ENCODE measurements at regions of chr6 and their contacts with region 1.

Region 1: GRCh38 chr6:12289933-12290820 is at the start of gene EDN1:
- DNase-seq: peak; percentile 86
- H3K4me3 Mint-ChIP-seq: peak within 1 kb of the TSS; percentile 75
- H3K27ac Mint-ChIP-seq: peak within 1 kb of the TSS; percentile 94
- H3K4me1 Mint-ChIP-seq: peaks cover 55% of the 10 kb centered on the region
- H3K27me3 Mint-ChIP-seq: no peaks in the 10 kb centered on the region
- CTCF ChIP-seq: peak; percentile 39
- total RNA-seq, gene EDN1: 1.2 and 2.7 TPM in 2 replicates

Region 2: GRCh38 chr6:11770546-11771466 is 519.4 kb before region 1 on chr6:
- CTCF ChIA-PET with region 1: interaction called, 4 read pairs
- POLR2A ChIA-PET with region 1: interaction called, 11 read pairs
- intact Hi-C with region 1: loop called (anchors 5 kb)
- DNase-seq: peak; percentile 100
- H3K4me3 Mint-ChIP-seq: peak overlapping the region; percentile 69
- H3K27ac Mint-ChIP-seq: peak overlapping the region; percentile 96
- H3K4me1 Mint-ChIP-seq: peaks cover 61% of the 10 kb centered on the region
- H3K27me3 Mint-ChIP-seq: no peaks in the 10 kb centered on the region
- CTCF ChIP-seq: no peak

Region 3: GRCh38 chr6:11833626-11834592 is 456.3 kb before region 1 on chr6:
- CTCF ChIA-PET with region 1: no interaction called
- POLR2A ChIA-PET with region 1: no interaction called
- intact Hi-C with region 1: no loop called
- DNase-seq: no peak
- H3K4me3 Mint-ChIP-seq: no peak overlapping the region
- H3K27ac Mint-ChIP-seq: no peak overlapping the region
- H3K4me1 Mint-ChIP-seq: no peaks in the 10 kb centered on the region
- H3K27me3 Mint-ChIP-seq: no peaks in the 10 kb centered on the region
- CTCF ChIP-seq: no peak

Region 4: DNA sequence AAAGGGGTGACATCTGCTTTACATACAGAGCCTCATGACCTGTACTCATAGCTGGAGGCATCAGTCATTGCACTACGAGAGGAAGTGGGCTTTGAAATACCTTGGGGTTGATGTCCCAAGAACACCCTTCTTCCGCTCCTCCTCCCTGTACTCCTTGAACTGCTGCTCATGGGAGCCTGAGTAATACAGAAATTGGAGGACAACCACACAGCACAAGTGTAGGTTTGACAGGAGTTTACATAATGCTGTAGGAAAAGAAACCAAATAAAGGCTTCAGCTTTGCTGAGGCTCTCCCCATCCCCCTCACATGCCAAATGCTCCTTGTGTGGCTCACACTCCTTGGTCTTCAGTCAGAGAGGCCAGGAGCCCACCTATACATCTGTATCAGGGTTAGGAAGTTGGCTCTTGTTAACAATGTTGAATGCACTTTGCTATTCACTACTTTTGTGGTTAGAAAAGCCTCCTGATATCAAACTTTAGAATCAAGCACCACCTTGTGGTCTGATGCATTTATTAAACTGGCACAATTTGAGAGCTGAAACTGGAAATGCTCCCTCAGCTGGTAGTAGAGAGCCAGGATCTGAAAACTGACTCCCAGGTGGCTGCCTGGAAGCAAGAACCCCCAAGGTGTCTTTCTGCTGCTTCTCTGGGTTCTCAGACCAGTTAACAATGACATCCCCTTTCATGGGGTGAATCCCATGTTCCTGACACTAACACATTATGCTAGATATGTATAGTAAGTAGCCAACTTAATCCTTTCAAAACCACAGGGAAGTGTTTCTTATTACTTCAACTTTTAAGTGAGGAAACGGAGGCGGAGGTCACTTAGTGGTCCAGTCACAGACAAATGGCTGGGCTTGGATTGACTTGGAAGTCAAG is 56.2 kb before region 1 on chr6:
- CTCF ChIA-PET with region 1: interaction called, 42 read pairs
- POLR2A ChIA-PET with region 1: interaction called, 11 read pairs
- intact Hi-C with region 1: loop called (anchors 1 kb)
- DNase-seq: peak; percentile 81
- H3K4me3 Mint-ChIP-seq: no peak overlapping the region
- H3K27ac Mint-ChIP-seq: no peak overlapping the region
- H3K4me1 Mint-ChIP-seq: no peaks in the 10 kb centered on the region
- H3K27me3 Mint-ChIP-seq: no peaks in the 10 kb centered on the region
- CTCF ChIP-seq: peak; percentile 74

Region 5: GRCh38 chr6:12331956-12332749 is 42.0 kb after region 1 on chr6:
- CTCF ChIA-PET with region 1: interaction called, 28 read pairs
- POLR2A ChIA-PET with region 1: interaction called, 103 read pairs
- intact Hi-C with region 1: no loop called
- DNase-seq: peak; percentile 47
- H3K4me3 Mint-ChIP-seq: no peak overlapping the region
- H3K27ac Mint-ChIP-seq: no peak overlapping the region
- H3K4me1 Mint-ChIP-seq: peaks cover 35% of the 10 kb centered on the region
- H3K27me3 Mint-ChIP-seq: no peaks in the 10 kb centered on the region
- CTCF ChIP-seq: no peak

Region 6: DNA sequence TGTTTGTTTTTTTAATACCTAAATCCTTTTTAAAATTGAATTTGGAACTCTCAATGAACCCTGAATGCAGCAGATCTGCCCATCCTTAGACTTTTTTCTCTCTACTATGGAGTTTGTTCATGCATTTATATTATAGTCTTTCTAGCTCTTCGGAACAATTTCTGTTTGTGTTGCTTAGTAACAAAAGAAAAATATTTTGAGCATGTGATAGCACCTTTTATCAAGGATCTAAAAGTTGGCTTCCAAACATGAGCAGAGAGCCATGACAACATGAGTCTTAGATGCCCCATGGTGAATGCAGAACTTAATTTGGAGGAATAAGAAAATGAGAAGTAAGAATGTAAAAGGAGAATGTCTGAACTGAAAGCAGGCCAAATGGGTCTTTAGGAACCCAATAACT is 133.7 kb after region 1 on chr6:
- CTCF ChIA-PET with region 1: no interaction called
- POLR2A ChIA-PET with region 1: no interaction called
- intact Hi-C with region 1: no loop called
- DNase-seq: no peak
- H3K4me3 Mint-ChIP-seq: no peak overlapping the region
- H3K27ac Mint-ChIP-seq: no peak overlapping the region
- H3K4me1 Mint-ChIP-seq: peaks cover 9% of the 10 kb centered on the region
- H3K27me3 Mint-ChIP-seq: no peaks in the 10 kb centered on the region
- CTCF ChIP-seq: no peak

Region 7: DNA sequence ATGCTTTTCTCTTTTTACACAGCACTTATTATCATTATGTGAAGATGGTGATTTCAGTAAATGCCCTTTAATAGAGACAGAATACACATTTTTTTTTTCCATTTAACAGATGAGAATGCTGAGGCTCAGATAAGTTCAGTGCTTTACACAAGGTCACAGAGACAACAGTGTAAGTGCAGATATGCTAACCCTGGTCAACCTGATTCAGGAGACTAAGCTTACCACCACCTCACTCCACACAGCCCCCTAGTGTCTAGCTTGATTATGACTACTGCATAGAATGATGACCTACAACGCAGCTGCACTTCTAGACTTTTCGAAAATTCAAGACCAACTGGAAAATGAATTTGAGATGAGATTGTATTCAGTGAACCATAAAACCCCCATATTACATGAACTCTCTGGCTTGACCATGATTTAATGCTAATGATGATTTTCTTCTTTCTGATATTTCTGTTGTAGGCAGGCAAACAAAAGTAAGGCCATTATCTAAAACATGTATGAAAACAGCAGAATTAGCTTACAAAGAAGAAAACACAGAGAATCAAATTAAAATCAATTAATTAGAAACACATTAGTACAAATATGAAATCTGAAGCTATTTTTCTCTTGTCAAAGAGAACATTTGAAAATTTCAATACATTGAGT is 214.3 kb after region 1 on chr6:
- CTCF ChIA-PET with region 1: interaction called, 4 read pairs
- POLR2A ChIA-PET with region 1: interaction called, 6 read pairs
- intact Hi-C with region 1: loop called (anchors 1 kb)
- DNase-seq: peak; percentile 61
- H3K4me3 Mint-ChIP-seq: no peak overlapping the region
- H3K27ac Mint-ChIP-seq: no peak overlapping the region
- H3K4me1 Mint-ChIP-seq: peaks cover 7% of the 10 kb centered on the region
- H3K27me3 Mint-ChIP-seq: no peaks in the 10 kb centered on the region
- CTCF ChIP-seq: peak; percentile 55

Region 8: GRCh38 chr6:12605888-12606345 is 315.7 kb after region 1 on chr6:
- CTCF ChIA-PET with region 1: interaction called, 197 read pairs
- POLR2A ChIA-PET with region 1: interaction called, 116 read pairs
- intact Hi-C with region 1: loop called (anchors 1 kb)
- DNase-seq: peak; percentile 80
- H3K4me3 Mint-ChIP-seq: no peak overlapping the region
- H3K27ac Mint-ChIP-seq: no peak overlapping the region
- H3K4me1 Mint-ChIP-seq: peaks cover 30% of the 10 kb centered on the region
- H3K27me3 Mint-ChIP-seq: no peaks in the 10 kb centered on the region
- CTCF ChIP-seq: peak; percentile 69

Region 9: DNA sequence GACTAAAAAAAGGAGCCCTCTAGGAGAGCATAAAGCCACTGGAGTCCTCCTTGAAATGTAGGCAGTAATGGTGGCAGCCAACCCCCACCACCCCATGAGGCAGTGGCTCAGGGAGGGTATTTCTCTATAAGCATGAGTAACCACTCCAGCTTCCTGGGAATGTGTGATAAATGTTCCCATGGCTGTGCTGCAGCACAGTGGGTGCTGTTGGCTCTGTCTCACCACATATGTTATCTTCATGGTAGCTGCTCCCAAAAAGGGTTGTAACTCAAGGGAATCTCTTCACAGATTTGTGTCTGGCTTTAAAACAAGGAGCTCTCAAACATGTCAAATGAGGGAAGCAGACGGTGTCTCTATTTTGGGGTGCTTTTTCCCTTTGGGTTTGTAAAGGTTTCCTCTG is 418.9 kb after region 1 on chr6:
- CTCF ChIA-PET with region 1: no interaction called
- POLR2A ChIA-PET with region 1: no interaction called
- intact Hi-C with region 1: no loop called
- DNase-seq: no peak
- H3K4me3 Mint-ChIP-seq: no peak overlapping the region
- H3K27ac Mint-ChIP-seq: no peak overlapping the region
- H3K4me1 Mint-ChIP-seq: no peaks in the 10 kb centered on the region
- H3K27me3 Mint-ChIP-seq: peaks cover 42% of the 10 kb centered on the region
- CTCF ChIP-seq: no peak

Measured in MCF 10A (cell line).